ENCODE measurements at regions of chr4 and their contacts with region 1.

Region 1: DNA sequence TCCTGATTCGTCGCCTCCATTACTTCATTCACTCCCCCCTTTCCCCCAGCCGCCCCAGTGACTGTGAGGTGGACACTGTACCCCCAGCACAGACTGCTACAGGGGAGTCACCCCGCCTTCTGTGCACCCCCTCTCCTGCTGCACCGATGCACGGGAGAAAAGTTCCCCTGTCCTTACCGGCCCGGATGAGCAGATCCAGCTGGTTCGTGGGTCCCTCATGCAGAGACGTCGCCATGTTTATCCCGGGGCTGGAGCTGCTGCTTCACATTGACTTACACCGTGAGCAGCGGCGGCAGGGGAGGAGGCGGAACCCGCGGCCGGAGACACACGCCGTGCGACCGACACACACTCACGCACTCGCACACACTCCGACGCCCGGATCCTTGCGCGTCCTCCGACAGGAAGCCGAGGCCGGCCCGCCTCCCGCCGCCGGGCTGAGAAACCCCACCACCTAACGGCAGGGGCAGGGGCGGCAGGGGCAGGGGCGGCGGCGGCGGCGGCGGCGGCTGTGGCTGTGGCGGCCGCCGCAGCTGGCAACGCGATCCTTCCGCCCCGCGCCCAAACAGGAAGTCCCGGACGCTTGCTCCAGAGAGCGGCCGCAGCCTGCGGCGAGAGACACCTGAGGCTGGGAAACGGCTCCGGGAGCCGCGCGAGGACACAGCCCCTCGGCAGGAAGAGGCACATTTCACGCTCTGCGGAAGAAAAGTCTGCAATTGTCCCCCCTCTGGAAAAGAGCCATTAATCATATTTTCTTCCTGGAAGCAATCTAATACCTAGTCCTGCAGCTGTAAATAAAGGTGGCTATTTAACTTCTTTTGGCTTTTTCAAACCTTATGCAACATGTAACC is 68.6 kb downstream of the NOCT start:
- DNase-seq: peak; percentile 65 to 81
- H3K4me3 ChIP-seq: peak overlapping the region; percentile 95
- H3K27ac ChIP-seq: peak overlapping the region; percentile 85
- H3K4me1 ChIP-seq: peaks cover 27% of the 10 kb centered on the region
- H3K27me3 ChIP-seq: no peaks in the 10 kb centered on the region
- CTCF ChIP-seq: no peak

Region 2: GRCh38 chr4:139015269-139015947 is 68.8 kb before region 1 on chr4 and contains the start of gene NOCT:
- CTCF ChIA-PET with region 1: no interaction called
- POLR2A ChIA-PET with region 1: no interaction called
- intact Hi-C with region 1: no loop called
- DNase-seq: peak; percentile 71 to 87
- H3K4me3 ChIP-seq: peak within 1 kb of the TSS; percentile 73
- H3K27ac ChIP-seq: peak within 1 kb of the TSS; percentile 92
- H3K4me1 ChIP-seq: peaks cover 30% of the 10 kb centered on the region
- H3K27me3 ChIP-seq: no peaks in the 10 kb centered on the region
- CTCF ChIP-seq: no peak
- total RNA-seq, gene NOCT: 4.5 and 6.8 TPM in 2 replicates

Region 3: GRCh38 chr4:139177868-139178611 is 93.9 kb after region 1 on chr4:
- CTCF ChIA-PET with region 1: interaction called, 14 read pairs
- POLR2A ChIA-PET with region 1: interaction called, 3 read pairs
- intact Hi-C with region 1: loop called (anchors 1 kb)
- DNase-seq: peak; percentile 69 to 97
- H3K4me3 ChIP-seq: peak overlapping the region; percentile 83
- H3K27ac ChIP-seq: peak overlapping the region; percentile 21
- H3K4me1 ChIP-seq: peaks cover 11% of the 10 kb centered on the region
- H3K27me3 ChIP-seq: no peaks in the 10 kb centered on the region
- CTCF ChIP-seq: no peak

Region 4: DNA sequence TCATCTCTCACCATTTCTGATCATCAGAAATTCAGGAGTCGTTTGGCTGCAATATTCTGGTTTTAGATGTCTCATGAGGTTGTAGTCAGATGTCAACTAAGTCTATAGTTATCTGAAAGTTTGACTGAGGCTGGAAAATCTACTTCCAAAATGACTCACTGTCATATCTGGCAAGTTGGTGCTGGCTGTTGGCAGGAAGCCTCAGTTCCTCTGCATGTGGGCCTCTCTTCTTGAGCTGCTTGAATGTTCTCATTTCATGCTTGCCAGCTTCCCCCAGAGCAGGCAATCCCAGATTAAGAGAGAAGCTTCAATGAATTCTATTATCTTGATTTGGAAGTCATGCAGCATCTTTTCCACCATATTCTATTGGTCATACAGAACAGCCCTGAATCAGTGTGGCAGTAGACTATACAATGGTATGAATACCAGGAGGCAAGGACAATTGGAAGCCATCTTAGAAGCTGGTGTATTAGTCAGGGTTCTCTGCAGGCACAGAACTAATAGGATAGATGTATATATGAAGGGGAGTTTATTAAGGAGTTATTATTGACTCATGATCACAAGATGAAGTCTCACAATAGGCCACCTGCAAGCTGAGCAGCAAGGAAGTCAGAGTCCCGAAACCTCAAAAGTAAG is 139.6 kb after region 1 on chr4:
- CTCF ChIA-PET with region 1: no interaction called
- POLR2A ChIA-PET with region 1: no interaction called
- intact Hi-C with region 1: no loop called
- DNase-seq: no peak
- H3K4me3 ChIP-seq: no peak overlapping the region
- H3K27ac ChIP-seq: no peak overlapping the region
- H3K4me1 ChIP-seq: no peaks in the 10 kb centered on the region
- H3K27me3 ChIP-seq: no peaks in the 10 kb centered on the region
- CTCF ChIP-seq: no peak

Region 5: DNA sequence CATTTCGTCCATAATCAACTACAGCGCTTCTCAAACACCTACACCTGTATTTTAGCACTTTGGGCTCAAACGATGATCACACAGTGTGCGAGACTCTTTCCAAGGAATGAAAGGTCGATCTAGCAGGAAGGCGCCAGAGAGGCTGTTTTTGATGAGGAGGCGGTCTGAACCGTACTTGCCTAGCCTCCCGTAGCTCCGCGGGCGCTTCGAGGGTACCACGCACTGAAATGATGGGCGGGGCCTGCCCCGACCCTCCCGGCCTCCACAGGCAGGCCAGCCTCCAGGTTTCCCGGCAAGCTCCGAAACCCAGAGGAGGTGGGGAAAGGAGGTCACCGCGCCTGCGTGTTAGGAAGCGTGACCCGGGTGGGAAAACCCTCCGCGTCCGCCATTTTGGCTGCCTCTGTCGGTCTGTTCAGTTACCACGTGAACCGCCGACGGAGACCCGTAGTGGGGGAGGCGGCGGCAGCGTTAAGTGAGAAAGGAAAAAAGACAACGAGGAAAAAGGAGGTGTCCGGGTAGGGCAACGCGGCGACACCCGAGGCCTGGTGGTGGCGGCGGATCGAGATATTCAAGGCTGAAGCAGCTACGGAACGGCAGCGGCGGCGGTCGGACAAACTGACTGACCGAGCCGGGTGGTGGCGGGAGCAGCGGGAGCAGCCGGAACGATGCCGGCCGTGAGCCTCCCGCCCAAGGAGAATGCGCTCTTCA is 217.1 kb after region 1 on chr4 and contains the start of gene NAA15:
- CTCF ChIA-PET with region 1: no interaction called
- POLR2A ChIA-PET with region 1: no interaction called
- intact Hi-C with region 1: loop called (anchors 2 kb)
- DNase-seq: peak; percentile 87 to 97
- H3K4me3 ChIP-seq: peak within 1 kb of the TSS; percentile 74
- H3K27ac ChIP-seq: peak within 1 kb of the TSS; percentile 83
- H3K4me1 ChIP-seq: peaks cover 24% of the 10 kb centered on the region
- H3K27me3 ChIP-seq: no peaks in the 10 kb centered on the region
- CTCF ChIP-seq: no peak
- total RNA-seq, gene NAA15: 43.8 and 51.7 TPM in 2 replicates

Region 6: GRCh38 chr4:139361301-139361700 is 277.1 kb after region 1 on chr4:
- CTCF ChIA-PET with region 1: no interaction called
- POLR2A ChIA-PET with region 1: no interaction called
- intact Hi-C with region 1: loop called (anchors 10 kb)
- DNase-seq: no peak
- H3K4me3 ChIP-seq: no peak overlapping the region
- H3K27ac ChIP-seq: no peak overlapping the region
- H3K4me1 ChIP-seq: no peaks in the 10 kb centered on the region
- H3K27me3 ChIP-seq: no peaks in the 10 kb centered on the region
- CTCF ChIP-seq: no peak

Region 7: GRCh38 chr4:139554893-139555704 is 470.9 kb after region 1 on chr4:
- CTCF ChIA-PET with region 1: no interaction called
- POLR2A ChIA-PET with region 1: interaction called, 28 read pairs
- intact Hi-C with region 1: no loop called
- DNase-seq: peak; percentile 62 to 88
- H3K4me3 ChIP-seq: peak overlapping the region; percentile 87
- H3K27ac ChIP-seq: peak overlapping the region; percentile 67
- H3K4me1 ChIP-seq: peaks cover 27% of the 10 kb centered on the region
- H3K27me3 ChIP-seq: no peaks in the 10 kb centered on the region
- CTCF ChIP-seq: no peak

Measured in PC-9 (cell line).